ENCODE measurements at regions of chr16 and their contacts with region 1.

Region 1: DNA sequence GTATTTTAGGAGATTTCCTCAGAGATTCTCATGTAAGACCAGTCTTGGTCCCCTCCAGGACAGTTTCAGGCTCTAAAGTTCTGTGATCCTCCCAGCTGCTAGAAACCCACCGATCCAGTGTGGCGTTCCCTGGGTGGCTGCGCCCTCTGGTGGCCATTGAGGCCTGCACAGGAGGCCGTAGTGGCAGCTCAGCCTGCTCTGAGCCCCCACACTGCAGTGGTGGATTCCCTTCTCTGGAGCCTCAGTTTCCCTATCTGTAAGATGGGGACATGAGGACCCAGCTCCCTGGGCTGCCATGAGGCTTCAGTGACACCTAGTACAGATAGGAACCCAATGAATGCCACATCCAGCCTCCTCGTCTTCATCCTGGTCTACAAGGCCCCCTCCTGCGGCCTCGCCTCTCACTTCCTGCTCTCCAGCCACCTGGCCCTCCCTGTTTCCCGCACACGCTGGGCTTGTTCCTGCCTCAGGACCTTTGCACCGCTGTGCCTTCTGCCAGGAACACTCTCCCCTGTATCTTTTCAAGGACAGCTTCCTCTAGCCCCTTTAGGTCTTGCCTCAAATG is 16.5 kb downstream of the CCDC102A start:
- DNase-seq: peak; percentile 73
- ATAC-seq: peak; percentile 91
- H3K4me3 ChIP-seq: no peak overlapping the region
- H3K27ac ChIP-seq: no peak overlapping the region
- H3K4me1 ChIP-seq: peaks cover 14% of the 10 kb centered on the region
- H3K27me3 ChIP-seq: no peaks in the 10 kb centered on the region
- CTCF ChIP-seq: peak; percentile 99
- EP300 ChIP-seq: no peak
- POLR2A ChIP-seq: no peak
- RAD21 ChIP-seq: peak; percentile 99

Region 2: GRCh38 chr16:57413301-57413730 is 106.6 kb before region 1 on chr16:
- CTCF ChIA-PET with region 1: interaction called, 78 read pairs
- POLR2A ChIA-PET with region 1: interaction called, 8 read pairs
- in situ Hi-C with region 1: no loop called
- intact Hi-C with region 1: no loop called
- DNase-seq: no peak
- ATAC-seq: no peak
- H3K4me3 ChIP-seq: no peak overlapping the region
- H3K27ac ChIP-seq: no peak overlapping the region
- H3K4me1 ChIP-seq: peaks cover 46% of the 10 kb centered on the region
- H3K27me3 ChIP-seq: peaks cover 10 to 55% of the 10 kb centered on the region in 2 experiments; a peak in 4 of 5 replicates
- CTCF ChIP-seq: no peak
- EP300 ChIP-seq: no peak
- POLR2A ChIP-seq: no peak
- RAD21 ChIP-seq: no peak

Region 3: DNA sequence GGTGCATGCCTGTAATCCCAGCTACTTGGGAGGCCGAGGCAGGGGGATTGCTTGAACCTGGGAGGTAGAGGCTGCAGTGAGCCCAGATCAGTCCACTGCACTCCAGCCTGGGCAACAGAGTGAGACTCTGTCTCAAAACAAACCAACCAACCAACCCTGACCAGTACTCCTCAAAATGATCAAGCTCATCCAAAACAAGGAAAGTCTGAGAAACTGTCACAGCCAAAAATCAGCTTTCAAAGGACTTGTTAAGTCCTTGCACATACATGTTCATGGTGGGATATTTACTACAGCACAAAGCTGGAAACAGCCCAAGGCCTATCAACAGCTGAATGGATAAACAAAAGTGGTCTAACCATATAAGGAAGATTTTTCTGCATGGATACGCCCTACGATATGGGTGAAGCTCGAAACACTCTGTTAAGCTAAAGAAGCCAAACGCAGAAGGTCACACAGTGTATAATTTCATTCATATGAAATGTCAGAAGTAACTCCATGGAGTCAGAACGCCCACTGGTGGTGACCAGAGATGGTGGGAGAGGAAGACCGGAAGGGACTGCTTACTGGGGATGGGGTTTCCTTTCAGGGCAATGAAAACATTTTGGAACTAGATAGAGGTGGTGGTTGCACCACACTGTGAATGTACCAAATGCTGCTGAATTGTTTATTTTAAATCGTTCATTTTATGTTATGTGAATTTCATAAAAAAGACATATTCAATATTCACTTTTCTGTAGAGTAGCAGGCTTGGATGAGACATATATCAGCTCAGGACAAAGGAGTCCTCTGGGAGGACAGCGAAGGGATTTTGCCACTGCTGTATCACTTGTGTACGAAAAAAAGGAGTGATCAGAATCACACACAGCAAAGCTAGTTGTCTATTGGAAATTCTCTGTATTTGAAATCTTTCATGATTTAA is 97.6 kb before region 1 on chr16:
- CTCF ChIA-PET with region 1: interaction called, 78 read pairs
- POLR2A ChIA-PET with region 1: interaction called, 8 read pairs
- in situ Hi-C with region 1: loop called (anchors 5 kb)
- intact Hi-C with region 1: loop called (anchors 1 kb)
- DNase-seq: peak; percentile 77
- ATAC-seq: peak; percentile 74
- H3K4me3 ChIP-seq: no peak overlapping the region; a peak in 1 of 6 replicates
- H3K27ac ChIP-seq: no peak overlapping the region
- H3K4me1 ChIP-seq: peaks cover 32% of the 10 kb centered on the region
- H3K27me3 ChIP-seq: no peaks in the 10 kb centered on the region
- CTCF ChIP-seq: peak; percentile 91
- EP300 ChIP-seq: no peak
- POLR2A ChIP-seq: no peak
- RAD21 ChIP-seq: peak; percentile 72

Region 4: GRCh38 chr16:57462209-57462977 is 57.5 kb before region 1 on chr16 and contains the start of gene POLR2C:
- CTCF ChIA-PET with region 1: interaction called, 37 read pairs
- POLR2A ChIA-PET with region 1: interaction called, 9 read pairs
- in situ Hi-C with region 1: no loop called
- intact Hi-C with region 1: loop called (anchors 1 kb)
- DNase-seq: peak; percentile 80
- ATAC-seq: peak; percentile 97
- H3K4me3 ChIP-seq: peak within 1 kb of the TSS; percentile 94 to 100 (median 99)
- H3K27ac ChIP-seq: peak within 1 kb of the TSS; percentile 63
- H3K4me1 ChIP-seq: peaks cover 33% of the 10 kb centered on the region
- H3K27me3 ChIP-seq: no peaks in the 10 kb centered on the region; a peak in 1 of 5 replicates
- CTCF ChIP-seq: peak; percentile 99
- EP300 ChIP-seq: 0 out of 4 replicates have a peak, but pooled peaks of 1 of the 2 experiments have one; percentile 34
- POLR2A ChIP-seq: peak; percentile 99
- RAD21 ChIP-seq: peak; percentile 92
- total RNA-seq, gene POLR2C: 104 and 146 TPM in 2 replicates

Region 5: DNA sequence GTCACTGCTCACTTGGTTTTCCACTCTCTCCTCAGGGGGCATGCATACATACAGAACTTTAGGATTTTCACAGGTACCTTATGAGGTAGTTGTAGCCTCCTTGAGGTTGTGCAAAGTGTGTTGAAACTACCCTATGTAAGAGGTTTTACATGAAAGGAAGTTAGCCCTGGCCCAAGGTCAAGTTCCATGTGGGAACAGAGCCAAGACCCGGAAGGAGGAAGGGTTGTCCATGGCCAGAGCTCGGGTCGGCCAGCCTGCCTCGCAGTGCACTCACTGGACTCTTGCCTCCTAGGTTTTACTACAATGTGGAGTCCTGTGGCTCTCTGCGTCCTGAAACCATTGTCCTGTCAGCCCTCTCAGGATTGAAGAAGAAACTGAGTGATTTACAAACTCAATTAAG is 49.2 kb before region 1 on chr16:
- CTCF ChIA-PET with region 1: interaction called, 16 read pairs
- POLR2A ChIA-PET with region 1: interaction called, 15 read pairs
- in situ Hi-C with region 1: loop called (anchors 5 kb)
- intact Hi-C with region 1: loop called (anchors 1 kb)
- DNase-seq: no peak
- ATAC-seq: no peak
- H3K4me3 ChIP-seq: no peak overlapping the region
- H3K27ac ChIP-seq: peak overlapping the region; percentile 82
- H3K4me1 ChIP-seq: peaks cover 54% of the 10 kb centered on the region
- H3K27me3 ChIP-seq: no peaks in the 10 kb centered on the region
- CTCF ChIP-seq: no peak
- EP300 ChIP-seq: no peak
- POLR2A ChIP-seq: no peak
- RAD21 ChIP-seq: no peak

Region 6: GRCh38 chr16:57475711-57476339 is 44.1 kb before region 1 on chr16:
- CTCF ChIA-PET with region 1: interaction called, 16 read pairs
- POLR2A ChIA-PET with region 1: interaction called, 15 read pairs
- in situ Hi-C with region 1: loop called (anchors 5 kb)
- intact Hi-C with region 1: loop called (anchors 1 kb)
- DNase-seq: peak; percentile 69
- ATAC-seq: peak; percentile 73
- H3K4me3 ChIP-seq: no peak overlapping the region
- H3K27ac ChIP-seq: peak overlapping the region; percentile 11
- H3K4me1 ChIP-seq: peaks cover 84% of the 10 kb centered on the region
- H3K27me3 ChIP-seq: no peaks in the 10 kb centered on the region
- CTCF ChIP-seq: peak; percentile 64
- EP300 ChIP-seq: 0 out of 4 replicates have a peak, but pooled peaks of 1 of the 2 experiments have one; percentile 21
- POLR2A ChIP-seq: no peak
- RAD21 ChIP-seq: peak; percentile 94

Region 7: DNA sequence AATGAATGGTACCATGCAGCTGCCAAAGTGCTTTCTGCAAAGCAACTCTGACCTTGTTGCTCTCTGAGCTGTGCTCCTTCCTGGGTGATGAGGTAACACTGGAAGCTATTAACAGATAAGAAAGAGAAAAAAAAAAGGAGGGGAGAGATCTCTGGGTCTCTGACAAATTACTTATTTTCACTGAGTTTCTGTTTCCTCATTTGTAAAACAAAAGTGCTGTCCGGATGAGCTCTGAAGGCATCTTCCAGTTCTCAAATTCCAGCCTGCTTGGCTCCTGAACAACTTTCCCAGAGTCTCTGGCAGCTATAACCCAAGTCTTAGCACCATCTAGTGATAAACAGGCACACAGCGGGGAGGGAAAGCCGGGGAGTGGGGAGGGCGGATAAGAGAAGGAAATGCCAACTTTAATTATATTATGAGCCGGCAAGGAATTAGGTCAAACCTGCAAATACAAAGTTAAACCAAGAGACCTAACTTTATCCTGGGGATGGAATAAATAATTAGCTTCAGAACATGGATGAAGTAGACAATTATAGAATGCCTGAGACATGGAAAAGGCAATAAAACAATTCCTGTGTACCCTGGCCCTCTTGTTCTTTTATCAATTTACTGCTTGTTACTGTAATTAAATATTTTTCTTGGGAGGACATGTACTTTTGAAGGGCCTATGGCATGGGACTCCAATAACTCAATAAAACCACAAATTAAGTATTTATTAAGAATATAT is 343.7 kb after region 1 on chr16:
- CTCF ChIA-PET with region 1: no interaction called
- POLR2A ChIA-PET with region 1: no interaction called
- in situ Hi-C with region 1: no loop called
- intact Hi-C with region 1: no loop called
- DNase-seq: peak; percentile 68
- ATAC-seq: peak; percentile 54
- H3K4me3 ChIP-seq: peak overlapping the region in 2 of 3 experiments; percentile 65 to 72; a peak in 2 of 6 replicates
- H3K27ac ChIP-seq: peak overlapping the region; percentile 54
- H3K4me1 ChIP-seq: peaks cover 86% of the 10 kb centered on the region
- H3K27me3 ChIP-seq: no peaks in the 10 kb centered on the region
- CTCF ChIP-seq: peak; percentile 83
- EP300 ChIP-seq: no peak; a peak in 2 of 4 replicates
- POLR2A ChIP-seq: no peak
- RAD21 ChIP-seq: peak; percentile 68

Measured in HepG2 (cell line).